PC-9 (cell line): ENCODE measurements at regions of chr2 and their contacts with region 1.

Region 1: GRCh38 chr2:165003433-165004130 is 48.3 kb upstream of the SLC38A11 start:
- DNase-seq: no peak
- H3K4me3 ChIP-seq: no peak overlapping the region
- H3K27ac ChIP-seq: no peak overlapping the region
- H3K4me1 ChIP-seq: no peaks in the 10 kb centered on the region
- H3K27me3 ChIP-seq: no peaks in the 10 kb centered on the region
- CTCF ChIP-seq: no peak

Region 2: DNA sequence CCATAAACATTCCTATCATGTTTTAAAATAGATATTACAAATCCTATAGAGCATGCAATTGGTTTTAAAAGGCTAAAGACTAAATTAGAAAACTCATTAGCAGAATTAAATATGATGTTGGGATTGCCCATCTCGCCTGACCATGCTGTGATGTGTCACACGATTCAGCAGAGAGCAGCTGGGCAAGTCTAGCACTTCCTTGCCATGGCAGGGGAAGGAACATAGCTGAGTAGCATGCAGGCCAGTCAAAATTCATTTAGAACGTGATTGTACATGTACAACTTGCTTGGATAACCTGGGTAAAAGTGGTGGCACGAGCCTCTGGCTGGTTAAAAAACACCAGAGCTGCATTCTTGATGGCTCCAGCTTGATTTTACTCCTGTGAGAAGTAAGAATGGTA is 118.9 kb after region 1 on chr2:
- CTCF ChIA-PET with region 1: no interaction called
- POLR2A ChIA-PET with region 1: no interaction called
- intact Hi-C with region 1: no loop called
- DNase-seq: no peak
- H3K4me3 ChIP-seq: no peak overlapping the region
- H3K27ac ChIP-seq: no peak overlapping the region
- H3K4me1 ChIP-seq: no peaks in the 10 kb centered on the region
- H3K27me3 ChIP-seq: no peaks in the 10 kb centered on the region
- CTCF ChIP-seq: no peak

Region 3: DNA sequence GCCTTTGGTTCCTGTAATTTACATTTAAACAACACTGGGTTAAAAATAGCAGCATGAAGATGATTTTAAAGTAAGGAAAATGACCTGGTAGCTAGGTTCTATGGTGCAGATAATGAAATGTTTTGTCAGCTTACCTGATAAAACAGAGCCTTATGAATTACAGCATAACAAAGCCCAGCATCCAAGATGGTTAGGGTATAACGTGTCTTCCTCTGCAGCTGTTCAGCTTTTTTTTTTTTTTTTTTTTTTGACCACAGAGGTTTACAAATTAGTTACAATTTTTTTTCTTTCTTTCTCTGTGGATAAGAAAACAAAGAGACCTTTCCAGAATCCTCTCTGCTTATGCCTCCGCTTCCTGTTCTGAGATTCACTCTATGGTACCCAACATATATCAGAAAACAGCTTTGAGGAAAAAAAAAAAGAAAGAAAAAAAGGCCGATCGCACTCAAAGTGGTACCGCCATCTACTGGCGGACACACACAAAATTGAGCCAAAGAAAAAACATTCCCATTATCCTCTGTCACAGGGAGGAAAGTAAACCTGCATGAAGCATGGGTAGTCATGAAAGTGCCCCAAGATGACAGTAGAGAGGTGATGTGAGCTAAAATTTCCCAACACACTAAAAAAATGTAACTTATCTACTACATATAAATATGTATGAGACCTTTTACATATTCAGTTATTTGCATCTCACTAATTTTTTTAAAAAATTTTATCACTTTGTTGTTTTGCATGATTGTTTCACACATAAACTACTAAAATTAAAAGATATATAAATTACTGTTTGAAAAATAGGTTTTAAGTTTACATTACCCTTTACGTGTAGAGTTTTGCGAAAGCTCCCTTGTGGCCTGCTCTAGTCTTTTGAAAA is 200.3 kb after region 1 on chr2 and contains the start of gene SCN3A:
- CTCF ChIA-PET with region 1: interaction called, 10 read pairs
- POLR2A ChIA-PET with region 1: no interaction called
- intact Hi-C with region 1: no loop called
- DNase-seq: peak in 1 of 2 experiments; percentile 10
- H3K4me3 ChIP-seq: no peak within 1 kb of the TSS
- H3K27ac ChIP-seq: no peak within 1 kb of the TSS
- H3K4me1 ChIP-seq: no peaks in the 10 kb centered on the region
- H3K27me3 ChIP-seq: no peaks in the 10 kb centered on the region
- CTCF ChIP-seq: peak; percentile 66
- total RNA-seq, gene SCN3A: not detected in 2 replicates